Panc1 (cell line): ENCODE measurements at regions of chr4 and their contacts with region 1.

Region 1: DNA sequence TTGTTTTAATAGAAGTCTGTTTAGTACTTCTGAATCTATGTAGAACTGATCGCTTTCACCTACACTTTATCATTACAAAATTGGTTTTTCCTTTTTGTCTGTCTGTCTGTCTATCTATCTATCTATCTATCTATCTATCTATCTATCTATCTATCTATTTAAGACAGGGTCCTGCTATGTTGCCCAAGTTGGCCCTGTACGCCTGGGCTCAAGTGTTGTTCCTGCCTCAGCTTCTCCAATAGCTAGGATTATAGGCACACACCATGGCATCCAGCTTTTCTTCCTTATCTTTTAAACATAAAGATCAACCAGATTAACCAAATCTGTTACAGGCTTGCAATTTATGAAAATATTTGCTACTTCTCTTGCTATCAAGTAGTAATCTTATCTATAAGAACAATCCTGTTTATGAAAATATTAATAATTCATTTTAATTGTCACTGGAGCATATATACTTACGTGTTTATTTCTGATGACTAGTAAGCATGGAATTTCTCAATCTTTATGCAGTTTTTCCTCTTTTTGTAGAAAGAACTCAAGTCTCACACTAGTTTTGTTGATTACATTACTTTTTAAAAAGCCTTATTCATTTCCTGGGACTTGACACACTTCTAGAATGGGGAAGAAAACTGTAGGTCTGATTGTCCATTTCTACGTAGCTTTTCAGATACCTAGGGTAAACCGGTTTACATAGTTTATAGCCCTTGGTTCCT is 24.6 kb downstream of the KIAA0232 start:
- DNase-seq: no peak
- ATAC-seq: no peak
- H3K4me3 ChIP-seq: no peak overlapping the region
- H3K27ac ChIP-seq: no peak overlapping the region
- H3K4me1 ChIP-seq: no peaks in the 10 kb centered on the region
- H3K27me3 ChIP-seq: no peaks in the 10 kb centered on the region
- CTCF ChIP-seq: no peak

Region 2: GRCh38 chr4:6783053-6783981 is 23.8 kb before region 1 on chr4:
- CTCF ChIA-PET with region 1: no interaction called
- POLR2A ChIA-PET with region 1: interaction called, 24 read pairs
- in situ Hi-C with region 1: no loop called
- intact Hi-C with region 1: no loop called
- DNase-seq: no peak
- ATAC-seq: peak; percentile 85
- H3K4me3 ChIP-seq: peak overlapping the region; percentile 79 to 82
- H3K27ac ChIP-seq: peak overlapping the region; percentile 79
- H3K4me1 ChIP-seq: peaks cover 15% of the 10 kb centered on the region
- H3K27me3 ChIP-seq: no peaks in the 10 kb centered on the region
- CTCF ChIP-seq: no peak